CD8-positive, alpha-beta T cell (primary cell): ENCODE measurements at regions of chrX and their contacts with region 1.

Region 1: DNA sequence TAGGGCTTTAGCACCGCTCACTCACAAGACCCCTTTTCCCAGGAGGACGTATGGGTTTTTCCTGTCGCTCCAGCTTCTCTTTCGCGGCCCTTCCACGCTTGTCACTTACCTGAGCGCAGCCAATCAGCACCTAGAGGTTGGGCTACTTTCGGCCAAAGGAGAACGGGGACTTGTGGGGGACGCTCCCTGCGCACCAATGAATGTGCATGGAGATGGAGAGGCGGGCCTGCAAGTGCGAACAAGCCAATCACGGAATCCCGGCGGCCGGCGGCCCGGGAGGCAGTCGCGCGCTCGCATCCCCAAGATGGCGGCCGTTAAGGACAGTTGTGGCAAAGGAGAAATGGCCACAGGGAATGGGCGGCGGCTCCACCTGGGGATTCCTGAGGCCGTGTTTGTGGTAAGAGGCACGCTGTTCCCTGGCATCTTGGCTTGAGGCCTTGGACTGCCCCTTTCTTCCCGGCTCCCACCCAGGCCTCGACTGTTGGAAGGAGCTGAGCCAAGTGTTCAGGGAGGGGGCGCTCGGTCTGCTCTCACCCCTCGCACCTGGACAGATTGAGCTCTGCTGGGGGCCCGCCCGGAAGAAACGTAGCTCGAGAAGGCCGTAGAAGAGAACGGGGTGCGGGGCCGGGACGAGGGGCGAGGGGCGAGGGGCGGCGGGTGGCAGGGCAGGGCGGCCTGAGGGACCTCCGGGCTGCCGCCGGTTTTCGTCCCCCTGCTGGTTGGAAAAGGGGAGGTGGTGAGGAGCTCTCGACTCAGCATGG is at the start of gene VBP1:
- DNase-seq: peak; percentile 66 to 94 (median 85)
- ATAC-seq: peak; percentile 97
- H3K4me3 ChIP-seq: peak within 1 kb of the TSS; percentile 72 to 76
- H3K4me3 Mint-ChIP-seq: peak within 1 kb of the TSS; percentile 89
- H3K27ac ChIP-seq: peak within 1 kb of the TSS; percentile 56 to 87
- H3K27ac Mint-ChIP-seq: peak within 1 kb of the TSS; percentile 94
- H3K4me1 ChIP-seq: peaks cover 10% of the 10 kb centered on the region
- H3K4me1 Mint-ChIP-seq: peaks cover 29% of the 10 kb centered on the region
- H3K27me3 ChIP-seq: no peaks in the 10 kb centered on the region
- H3K27me3 Mint-ChIP-seq: no peaks in the 10 kb centered on the region
- CTCF ChIP-seq: no peak
- total RNA-seq, gene VBP1: 10.9 to 12.6 TPM

Region 2: DNA sequence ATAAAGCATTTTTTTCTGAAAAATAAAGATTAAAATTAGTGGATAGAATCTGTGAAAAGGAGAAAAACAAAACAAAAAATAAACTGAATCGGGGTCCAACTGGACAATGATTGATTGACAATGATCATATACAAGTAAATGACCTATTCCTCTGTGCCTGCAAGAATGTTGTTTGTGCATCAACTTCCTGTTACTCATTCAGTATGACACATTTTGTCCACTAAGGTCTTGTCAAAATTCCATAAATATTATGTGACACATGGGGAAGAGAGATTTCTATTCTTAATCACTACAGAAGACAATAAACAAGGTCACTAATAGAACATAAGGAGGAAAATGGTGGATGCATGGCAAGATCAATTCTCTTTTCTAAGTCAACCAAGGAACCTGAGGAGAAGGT is 248.8 kb before region 1 on chrX:
- CTCF ChIA-PET with region 1: no interaction called
- POLR2A ChIA-PET with region 1: no interaction called
- intact Hi-C with region 1: no loop called
- DNase-seq: no peak
- ATAC-seq: no peak
- H3K4me3 ChIP-seq: no peak overlapping the region
- H3K4me3 Mint-ChIP-seq: no peak overlapping the region
- H3K27ac ChIP-seq: no peak overlapping the region
- H3K27ac Mint-ChIP-seq: no peak overlapping the region
- H3K4me1 ChIP-seq: no peaks in the 10 kb centered on the region
- H3K4me1 Mint-ChIP-seq: no peaks in the 10 kb centered on the region
- H3K27me3 ChIP-seq: no peaks in the 10 kb centered on the region
- H3K27me3 Mint-ChIP-seq: no peaks in the 10 kb centered on the region
- CTCF ChIP-seq: no peak

Region 3: DNA sequence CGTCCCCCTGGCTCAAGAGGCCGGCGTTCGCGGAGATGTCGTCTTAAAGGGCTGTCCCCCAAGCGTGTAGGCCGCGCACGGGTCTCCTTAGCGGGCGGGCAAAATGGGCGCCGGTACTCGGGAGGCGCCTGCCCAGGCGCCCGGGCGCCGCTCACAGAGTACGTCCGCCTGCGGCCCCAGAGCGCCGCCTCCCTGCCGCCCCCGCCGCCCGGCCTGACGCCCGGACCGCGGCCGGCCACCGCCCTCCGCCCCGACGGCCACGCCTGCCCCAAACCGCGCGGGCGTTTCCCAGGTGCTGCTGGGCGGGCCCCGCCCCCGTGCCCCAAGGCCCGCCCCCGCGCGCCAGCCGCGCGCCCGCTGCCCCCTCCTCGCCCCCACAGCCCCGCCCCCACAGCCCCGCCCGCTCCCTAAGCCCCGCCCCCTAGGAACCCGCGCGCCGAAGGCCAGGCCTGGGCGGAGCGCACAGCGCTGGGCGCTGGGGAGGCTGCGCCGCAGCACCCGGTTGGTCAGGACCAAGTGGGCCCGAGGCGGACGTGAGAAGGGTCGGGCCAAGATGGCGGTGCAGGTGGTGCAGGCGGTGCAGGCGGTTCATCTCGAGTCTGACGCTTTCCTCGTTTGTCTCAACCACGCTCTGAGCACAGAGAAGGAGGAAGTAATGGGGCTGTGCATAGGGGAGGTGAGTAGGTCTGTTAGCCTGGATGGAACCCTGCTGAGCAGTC is 145.2 kb before region 1 on chrX and contains the starts of genes BRCC3, CMC4 and MTCP1:
- CTCF ChIA-PET with region 1: no interaction called
- POLR2A ChIA-PET with region 1: no interaction called
- intact Hi-C with region 1: loop called in 1 of 2 experiments (anchors 1 kb)
- DNase-seq: peak; percentile 55 to 86 (median 70)
- ATAC-seq: peak; percentile 78
- H3K4me3 ChIP-seq: peak within 1 kb of the TSS; percentile 81 to 83
- H3K4me3 Mint-ChIP-seq: peak within 1 kb of the TSS; percentile 88
- H3K27ac ChIP-seq: peak within 1 kb of the TSS; percentile 80 to 84
- H3K27ac Mint-ChIP-seq: peak within 1 kb of the TSS; percentile 96
- H3K4me1 ChIP-seq: peaks cover 11% of the 10 kb centered on the region
- H3K4me1 Mint-ChIP-seq: peaks cover 58% of the 10 kb centered on the region
- H3K27me3 ChIP-seq: no peaks in the 10 kb centered on the region
- H3K27me3 Mint-ChIP-seq: no peaks in the 10 kb centered on the region
- CTCF ChIP-seq: no peak
- total RNA-seq, gene BRCC3: 8.9 to 9.6 TPM
- total RNA-seq, gene CMC4: 5.0 to 5.2 TPM
- total RNA-seq, gene MTCP1: 16.9 to 19.0 TPM

Region 4: GRCh38 chrX:155188786-155189185 is 27.6 kb before region 1 on chrX:
- CTCF ChIA-PET with region 1: no interaction called
- POLR2A ChIA-PET with region 1: interaction called, 18 read pairs
- intact Hi-C with region 1: loop called in 1 of 2 experiments (anchors 1 kb)
- DNase-seq: peak in 5 of 9 experiments; percentile 8 to 74 (median 20)
- ATAC-seq: peak; percentile 100
- H3K4me3 ChIP-seq: no peak overlapping the region
- H3K4me3 Mint-ChIP-seq: peak overlapping the region; percentile 71
- H3K27ac ChIP-seq: no peak overlapping the region
- H3K27ac Mint-ChIP-seq: peak overlapping the region; percentile 78
- H3K4me1 ChIP-seq: peaks cover 15% of the 10 kb centered on the region
- H3K4me1 Mint-ChIP-seq: peaks cover 49% of the 10 kb centered on the region
- H3K27me3 ChIP-seq: no peaks in the 10 kb centered on the region
- H3K27me3 Mint-ChIP-seq: no peaks in the 10 kb centered on the region
- CTCF ChIP-seq: no peak

Region 5: GRCh38 chrX:155263854-155264628 is 47.7 kb after region 1 on chrX and contains the start of gene RAB39B:
- CTCF ChIA-PET with region 1: no interaction called
- POLR2A ChIA-PET with region 1: interaction called, 7 read pairs
- intact Hi-C with region 1: loop called (anchors 1 to 5 kb)
- DNase-seq: peak; percentile 29 to 84 (median 68)
- ATAC-seq: peak; percentile 93
- H3K4me3 ChIP-seq: peak within 1 kb of the TSS; percentile 69 to 79
- H3K4me3 Mint-ChIP-seq: peak within 1 kb of the TSS; percentile 68
- H3K27ac ChIP-seq: peak within 1 kb of the TSS; percentile 86 to 88
- H3K27ac Mint-ChIP-seq: peak within 1 kb of the TSS; percentile 78
- H3K4me1 ChIP-seq: peaks cover 17% of the 10 kb centered on the region
- H3K4me1 Mint-ChIP-seq: peaks cover 30% of the 10 kb centered on the region
- H3K27me3 ChIP-seq: no peaks in the 10 kb centered on the region
- H3K27me3 Mint-ChIP-seq: no peaks in the 10 kb centered on the region
- CTCF ChIP-seq: no peak
- total RNA-seq, gene RAB39B: 3.5 to 3.6 TPM

Region 6: GRCh38 chrX:155767051-155767875 is 550.9 kb after region 1 on chrX:
- CTCF ChIA-PET with region 1: no interaction called
- POLR2A ChIA-PET with region 1: no interaction called
- intact Hi-C with region 1: no loop called
- DNase-seq: peak in 5 of 9 experiments; percentile 5 to 65 (median 37)
- ATAC-seq: peak; percentile 34
- H3K4me3 ChIP-seq: peak overlapping the region; percentile 35 to 37
- H3K4me3 Mint-ChIP-seq: peak overlapping the region; percentile 77
- H3K27ac ChIP-seq: no peak overlapping the region
- H3K27ac Mint-ChIP-seq: peak overlapping the region; percentile 11
- H3K4me1 ChIP-seq: no peaks in the 10 kb centered on the region
- H3K4me1 Mint-ChIP-seq: peaks cover 12% of the 10 kb centered on the region
- H3K27me3 ChIP-seq: no peaks in the 10 kb centered on the region
- H3K27me3 Mint-ChIP-seq: no peaks in the 10 kb centered on the region
- CTCF ChIP-seq: no peak